ENCODE measurements at regions of chr4 and their contacts with region 1.

Region 1: GRCh38 chr4:55948726-55949474 is at the start of gene CEP135:
- DNase-seq: peak; percentile 96
- H3K4me3 ChIP-seq: peak within 1 kb of the TSS; percentile 65 to 79
- H3K27ac ChIP-seq: peak within 1 kb of the TSS; percentile 98 to 99
- H3K4me1 ChIP-seq: peaks cover 0 to 7% of the 10 kb centered on the region in 2 experiments; a peak in 3 of 4 replicates
- H3K27me3 ChIP-seq: no peaks in the 10 kb centered on the region
- CTCF ChIP-seq: peak; percentile 92
- EP300 ChIP-seq: peak in 1 of 2 experiments; percentile 21; a peak in 1 of 4 replicates
- RAD21 ChIP-seq: peak; percentile 80
- polyA plus RNA-seq, gene CEP135: 1.6 and 2.4 TPM in 2 replicates

Region 2: GRCh38 chr4:55801498-55801897 is 147.4 kb before region 1 on chr4:
- CTCF ChIA-PET with region 1: no interaction called
- POLR2A ChIA-PET with region 1: no interaction called
- DNase-seq: no peak
- H3K4me3 ChIP-seq: no peak overlapping the region
- H3K27ac ChIP-seq: no peak overlapping the region
- H3K4me1 ChIP-seq: no peaks in the 10 kb centered on the region; a peak in 1 of 4 replicates
- H3K27me3 ChIP-seq: no peaks in the 10 kb centered on the region
- CTCF ChIP-seq: no peak
- EP300 ChIP-seq: no peak
- RAD21 ChIP-seq: no peak

Region 3: GRCh38 chr4:55904576-55904975 is 44.3 kb before region 1 on chr4:
- CTCF ChIA-PET with region 1: interaction called, 23 read pairs
- POLR2A ChIA-PET with region 1: interaction called, 6 read pairs
- DNase-seq: no peak
- H3K4me3 ChIP-seq: no peak overlapping the region
- H3K27ac ChIP-seq: peak overlapping the region; percentile 19 to 93; a peak in 3 of 4 replicates
- H3K4me1 ChIP-seq: peaks cover 7 to 11% of the 10 kb centered on the region in 2 experiments; a peak in 1 of 4 replicates
- H3K27me3 ChIP-seq: no peaks in the 10 kb centered on the region
- CTCF ChIP-seq: no peak
- EP300 ChIP-seq: no peak
- RAD21 ChIP-seq: no peak

Region 4: DNA sequence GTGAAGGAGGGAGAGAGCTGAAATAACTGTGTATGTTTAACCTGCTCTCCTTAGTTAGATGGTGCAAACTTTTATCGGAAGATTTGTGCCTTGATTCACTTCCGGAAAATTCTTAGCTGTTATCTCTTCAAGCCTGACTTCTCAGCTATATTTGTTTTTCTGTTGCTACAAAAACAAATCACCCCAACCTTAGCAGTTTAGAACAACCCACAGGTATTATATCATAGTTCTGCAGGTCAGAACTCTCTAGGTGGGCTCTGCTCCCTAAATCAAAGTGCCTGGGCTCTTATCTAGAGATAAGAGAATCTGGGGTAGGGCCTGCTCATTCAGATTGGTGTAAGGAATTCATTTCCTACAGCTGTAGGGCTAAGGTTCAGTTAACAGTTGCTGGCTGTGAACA is 15.3 kb before region 1 on chr4:
- CTCF ChIA-PET with region 1: interaction called, 33 read pairs
- POLR2A ChIA-PET with region 1: no interaction called
- DNase-seq: no peak
- H3K4me3 ChIP-seq: no peak overlapping the region
- H3K27ac ChIP-seq: no peak overlapping the region
- H3K4me1 ChIP-seq: no peaks in the 10 kb centered on the region
- H3K27me3 ChIP-seq: no peaks in the 10 kb centered on the region
- CTCF ChIP-seq: no peak
- EP300 ChIP-seq: no peak
- RAD21 ChIP-seq: no peak

Region 5: GRCh38 chr4:55965585-55965984 is 16.7 kb after region 1 on chr4:
- CTCF ChIA-PET with region 1: interaction called, 25 read pairs
- POLR2A ChIA-PET with region 1: no interaction called
- DNase-seq: no peak
- H3K4me3 ChIP-seq: no peak overlapping the region
- H3K27ac ChIP-seq: no peak overlapping the region
- H3K4me1 ChIP-seq: no peaks in the 10 kb centered on the region
- H3K27me3 ChIP-seq: no peaks in the 10 kb centered on the region
- CTCF ChIP-seq: no peak
- EP300 ChIP-seq: no peak
- RAD21 ChIP-seq: no peak

Region 6: DNA sequence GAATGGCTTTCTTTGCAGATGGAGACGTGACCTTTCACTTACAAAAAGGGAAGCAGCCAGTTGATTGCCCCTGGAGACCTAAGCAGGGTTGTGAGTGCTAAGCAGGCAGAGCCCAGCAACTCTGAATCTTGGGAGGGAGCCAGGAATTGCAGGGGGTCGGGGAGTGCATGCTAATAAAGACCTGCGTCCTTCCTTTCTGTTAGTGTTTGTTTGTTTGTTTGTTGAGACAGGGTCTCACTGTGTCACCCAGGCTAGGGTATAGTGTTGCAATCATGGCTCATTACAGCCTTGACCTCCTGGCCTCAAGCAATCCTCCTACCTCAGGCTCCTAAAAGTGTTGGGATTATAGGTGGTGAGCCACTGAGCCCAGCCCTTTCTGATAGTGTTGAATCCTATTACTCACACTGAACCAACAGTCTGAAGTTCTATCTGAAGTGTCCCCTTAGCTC is 137.2 kb after region 1 on chr4:
- CTCF ChIA-PET with region 1: no interaction called
- POLR2A ChIA-PET with region 1: no interaction called
- DNase-seq: no peak
- H3K4me3 ChIP-seq: no peak overlapping the region
- H3K27ac ChIP-seq: no peak overlapping the region
- H3K4me1 ChIP-seq: peaks cover 0 to 13% of the 10 kb centered on the region in 2 experiments; a peak in 2 of 4 replicates
- H3K27me3 ChIP-seq: no peaks in the 10 kb centered on the region
- CTCF ChIP-seq: no peak
- EP300 ChIP-seq: no peak
- RAD21 ChIP-seq: no peak

Region 7: DNA sequence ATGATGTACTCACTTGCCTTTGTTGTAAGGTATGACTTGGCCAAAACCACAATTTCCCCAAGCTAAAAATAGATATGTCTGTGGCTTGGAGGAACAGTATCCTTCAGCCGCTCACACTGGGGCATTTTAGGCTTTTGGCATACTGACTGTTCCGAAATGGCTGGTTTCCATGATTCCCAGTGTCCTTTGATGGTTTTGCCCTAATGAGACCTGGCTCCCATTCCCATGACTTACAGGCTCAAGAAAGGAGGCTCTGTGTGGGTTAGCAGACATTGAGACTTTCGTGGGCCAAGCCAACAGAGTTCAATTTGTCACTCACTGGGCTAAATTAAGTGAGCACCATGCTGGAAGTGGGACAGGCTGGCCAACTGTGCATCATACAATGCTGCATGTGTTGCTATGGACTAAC is 150.5 kb after region 1 on chr4:
- CTCF ChIA-PET with region 1: no interaction called
- POLR2A ChIA-PET with region 1: no interaction called
- DNase-seq: no peak
- H3K4me3 ChIP-seq: no peak overlapping the region
- H3K27ac ChIP-seq: no peak overlapping the region
- H3K4me1 ChIP-seq: no peaks in the 10 kb centered on the region; a peak in 1 of 4 replicates
- H3K27me3 ChIP-seq: no peaks in the 10 kb centered on the region
- CTCF ChIP-seq: no peak
- EP300 ChIP-seq: no peak
- RAD21 ChIP-seq: no peak

Region 8: GRCh38 chr4:56289934-56290333 is 341.0 kb after region 1 on chr4:
- CTCF ChIA-PET with region 1: interaction called, 16 read pairs
- POLR2A ChIA-PET with region 1: no interaction called
- DNase-seq: peak; percentile 27
- H3K4me3 ChIP-seq: no peak overlapping the region
- H3K27ac ChIP-seq: peak overlapping the region in 1 of 2 experiments; percentile 35; a peak in 1 of 4 replicates
- H3K4me1 ChIP-seq: peaks cover 0 to 4% of the 10 kb centered on the region in 2 experiments; a peak in 1 of 4 replicates
- H3K27me3 ChIP-seq: no peaks in the 10 kb centered on the region
- CTCF ChIP-seq: no peak
- EP300 ChIP-seq: no peak
- RAD21 ChIP-seq: no peak

Region 9: DNA sequence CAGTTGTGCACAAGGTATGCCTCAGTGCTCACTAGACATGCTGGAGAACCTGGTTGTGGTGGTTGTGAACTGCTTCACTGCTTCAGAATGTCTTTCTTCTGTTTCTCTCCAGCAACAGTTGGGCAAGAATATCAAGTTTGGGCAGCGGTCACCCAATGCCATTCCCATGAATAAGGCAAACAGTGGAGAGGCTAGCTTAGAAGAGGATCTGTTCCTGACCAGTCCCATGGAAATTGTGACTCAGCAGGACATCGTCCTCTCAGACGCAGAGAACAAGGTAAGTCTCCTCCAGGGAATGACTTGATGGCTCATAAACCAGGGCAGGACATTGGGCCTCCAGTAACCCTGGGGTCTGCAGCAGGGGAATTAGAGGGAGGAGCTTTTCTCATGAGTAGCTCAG is 358.5 kb after region 1 on chr4:
- CTCF ChIA-PET with region 1: interaction called, 40 read pairs
- POLR2A ChIA-PET with region 1: interaction called, 6 read pairs
- DNase-seq: no peak
- H3K4me3 ChIP-seq: no peak overlapping the region
- H3K27ac ChIP-seq: no peak overlapping the region
- H3K4me1 ChIP-seq: peaks cover 0 to 22% of the 10 kb centered on the region in 2 experiments; a peak in 2 of 4 replicates
- H3K27me3 ChIP-seq: no peaks in the 10 kb centered on the region
- CTCF ChIP-seq: no peak
- EP300 ChIP-seq: no peak
- RAD21 ChIP-seq: no peak

Region 10: DNA sequence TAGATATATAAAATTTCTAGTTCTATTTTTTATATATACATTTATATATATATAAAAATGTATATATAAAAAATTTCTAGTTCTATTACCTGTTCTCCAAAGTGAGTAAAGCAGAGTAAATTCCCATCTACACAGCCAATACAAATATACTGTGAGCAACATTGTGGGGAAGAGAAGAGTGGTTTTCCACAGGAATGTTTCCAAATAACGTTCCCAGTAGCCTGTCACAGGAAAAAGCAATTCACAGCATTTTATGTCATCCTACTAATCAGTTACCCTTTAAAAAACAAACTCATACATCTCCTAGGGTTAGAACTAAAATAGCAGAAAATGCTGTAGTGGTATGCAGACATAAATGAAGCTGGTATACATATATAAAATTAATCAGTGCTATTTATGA is 393.8 kb after region 1 on chr4:
- CTCF ChIA-PET with region 1: no interaction called
- POLR2A ChIA-PET with region 1: no interaction called
- DNase-seq: no peak
- H3K4me3 ChIP-seq: no peak overlapping the region
- H3K27ac ChIP-seq: no peak overlapping the region
- H3K4me1 ChIP-seq: no peaks in the 10 kb centered on the region
- H3K27me3 ChIP-seq: no peaks in the 10 kb centered on the region
- CTCF ChIP-seq: no peak
- EP300 ChIP-seq: no peak
- RAD21 ChIP-seq: no peak

Measured in SK-N-SH (cell line).